ENCODE measurements at regions of chr10 and their contacts with region 1.

Region 1: GRCh38 chr10:80382989-80383388 is 25.4 kb upstream of the PRXL2A start:
- DNase-seq: peak; percentile 87
- H3K4me3 Mint-ChIP-seq: no peak overlapping the region
- H3K27ac Mint-ChIP-seq: peak overlapping the region; percentile 49
- H3K4me1 Mint-ChIP-seq: peaks cover 13% of the 10 kb centered on the region
- H3K27me3 Mint-ChIP-seq: peaks cover 9% of the 10 kb centered on the region

Region 2: GRCh38 chr10:80372675-80373074 is 10.3 kb before region 1 on chr10:
- intact Hi-C with region 1: no loop called
- DNase-seq: no peak
- H3K4me3 Mint-ChIP-seq: no peak overlapping the region
- H3K27ac Mint-ChIP-seq: no peak overlapping the region
- H3K4me1 Mint-ChIP-seq: no peaks in the 10 kb centered on the region
- H3K27me3 Mint-ChIP-seq: peaks cover 10% of the 10 kb centered on the region

Region 3: GRCh38 chr10:80504158-80504811 is 121.3 kb after region 1 on chr10:
- intact Hi-C with region 1: loop called (anchors 1 kb)
- DNase-seq: no peak
- H3K4me3 Mint-ChIP-seq: peak overlapping the region; percentile 11
- H3K27ac Mint-ChIP-seq: peak overlapping the region; percentile 77
- H3K4me1 Mint-ChIP-seq: peaks cover 62% of the 10 kb centered on the region
- H3K27me3 Mint-ChIP-seq: no peaks in the 10 kb centered on the region

Region 4: GRCh38 chr10:80530251-80530650 is 147.3 kb after region 1 on chr10:
- intact Hi-C with region 1: loop called (anchors 5 kb)
- DNase-seq: peak; percentile 80
- H3K4me3 Mint-ChIP-seq: peak overlapping the region; percentile 34
- H3K27ac Mint-ChIP-seq: peak overlapping the region; percentile 81
- H3K4me1 Mint-ChIP-seq: peaks cover 65% of the 10 kb centered on the region
- H3K27me3 Mint-ChIP-seq: no peaks in the 10 kb centered on the region

Region 5: GRCh38 chr10:80588546-80588945 is 205.6 kb after region 1 on chr10:
- intact Hi-C with region 1: no loop called
- DNase-seq: no peak
- H3K4me3 Mint-ChIP-seq: no peak overlapping the region
- H3K27ac Mint-ChIP-seq: no peak overlapping the region
- H3K4me1 Mint-ChIP-seq: no peaks in the 10 kb centered on the region
- H3K27me3 Mint-ChIP-seq: peaks cover 6% of the 10 kb centered on the region

Region 6: DNA sequence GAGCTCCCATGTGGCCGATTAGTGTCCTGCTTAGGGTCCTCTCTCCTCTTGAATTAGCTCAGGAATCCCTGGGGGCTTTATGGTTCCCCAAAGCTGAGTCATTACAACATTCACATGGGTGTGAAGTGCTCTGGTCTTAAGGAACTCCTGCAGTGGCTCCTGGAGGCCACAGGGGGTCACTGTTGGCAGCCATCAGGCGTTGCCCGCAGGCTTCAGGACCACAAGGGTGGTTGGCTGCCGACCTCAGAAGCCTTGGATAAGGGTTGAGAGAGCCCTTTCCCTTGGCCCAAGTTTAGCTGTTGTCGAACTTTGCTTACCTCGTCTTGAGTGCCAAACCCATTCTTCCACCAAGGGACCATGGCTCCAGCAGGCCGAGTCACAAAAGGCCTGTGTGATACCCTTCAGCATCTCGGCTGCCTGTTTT is 216.4 kb after region 1 on chr10:
- intact Hi-C with region 1: loop called (anchors 5 kb)
- DNase-seq: peak; percentile 78
- H3K4me3 Mint-ChIP-seq: no peak overlapping the region
- H3K27ac Mint-ChIP-seq: no peak overlapping the region
- H3K4me1 Mint-ChIP-seq: peaks cover 3% of the 10 kb centered on the region
- H3K27me3 Mint-ChIP-seq: no peaks in the 10 kb centered on the region

Region 7: DNA sequence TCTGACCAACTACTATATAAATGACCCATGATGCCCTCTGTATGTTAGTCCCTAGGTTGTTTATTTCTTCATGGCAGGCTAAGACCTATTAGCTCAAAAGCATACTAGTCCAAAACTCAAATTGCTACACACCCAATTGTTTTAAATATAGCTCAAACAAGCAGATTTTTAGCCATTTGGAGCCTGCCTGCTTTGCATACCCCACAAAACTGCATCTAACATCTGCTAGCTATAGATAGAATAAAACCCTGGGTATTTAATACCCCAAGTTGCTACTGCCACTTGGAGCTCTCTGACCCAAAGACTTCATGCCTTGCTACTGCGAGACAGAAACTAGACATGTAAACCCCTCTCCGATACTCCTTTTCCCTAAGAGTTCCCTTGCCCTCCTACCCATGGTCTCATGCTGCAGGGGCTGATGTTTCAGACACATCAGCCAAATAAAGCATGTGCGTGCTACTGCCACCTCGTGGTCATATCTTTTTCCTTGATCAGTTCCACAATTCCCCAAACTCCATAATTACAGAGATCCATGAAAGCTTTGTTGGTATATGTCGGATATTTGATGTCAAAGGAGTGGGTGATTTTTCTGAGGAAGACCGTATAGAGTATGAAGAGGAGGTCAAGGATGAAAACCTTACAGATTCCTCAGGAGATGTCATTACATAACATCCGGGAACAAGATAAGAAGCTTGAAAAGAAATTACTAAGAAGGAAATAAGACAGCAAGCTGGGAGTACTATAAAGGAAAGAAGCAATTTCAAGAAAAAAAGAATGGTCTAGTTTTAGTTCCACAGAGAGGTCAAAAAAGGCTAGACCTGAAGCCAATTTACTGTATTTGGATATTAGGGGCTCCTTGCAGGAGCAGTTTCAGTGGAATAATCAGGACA is 541.3 kb after region 1 on chr10:
- intact Hi-C with region 1: loop called (anchors 2 kb)
- DNase-seq: peak; percentile 70
- H3K4me3 Mint-ChIP-seq: no peak overlapping the region
- H3K27ac Mint-ChIP-seq: no peak overlapping the region
- H3K4me1 Mint-ChIP-seq: no peaks in the 10 kb centered on the region
- H3K27me3 Mint-ChIP-seq: peaks cover 10% of the 10 kb centered on the region